ENCODE measurements at regions of chr2 and their contacts with region 1.

Region 1: GRCh38 chr2:38076606-38077430 is 867 bp upstream of the CYP1B1 start:
- DNase-seq: peak; percentile 80
- H3K4me3 Mint-ChIP-seq: peak overlapping the region; percentile 73
- H3K27ac Mint-ChIP-seq: peak overlapping the region; percentile 82
- H3K4me1 Mint-ChIP-seq: peaks cover 38% of the 10 kb centered on the region
- H3K27me3 Mint-ChIP-seq: peaks cover 64% of the 10 kb centered on the region

Region 2: DNA sequence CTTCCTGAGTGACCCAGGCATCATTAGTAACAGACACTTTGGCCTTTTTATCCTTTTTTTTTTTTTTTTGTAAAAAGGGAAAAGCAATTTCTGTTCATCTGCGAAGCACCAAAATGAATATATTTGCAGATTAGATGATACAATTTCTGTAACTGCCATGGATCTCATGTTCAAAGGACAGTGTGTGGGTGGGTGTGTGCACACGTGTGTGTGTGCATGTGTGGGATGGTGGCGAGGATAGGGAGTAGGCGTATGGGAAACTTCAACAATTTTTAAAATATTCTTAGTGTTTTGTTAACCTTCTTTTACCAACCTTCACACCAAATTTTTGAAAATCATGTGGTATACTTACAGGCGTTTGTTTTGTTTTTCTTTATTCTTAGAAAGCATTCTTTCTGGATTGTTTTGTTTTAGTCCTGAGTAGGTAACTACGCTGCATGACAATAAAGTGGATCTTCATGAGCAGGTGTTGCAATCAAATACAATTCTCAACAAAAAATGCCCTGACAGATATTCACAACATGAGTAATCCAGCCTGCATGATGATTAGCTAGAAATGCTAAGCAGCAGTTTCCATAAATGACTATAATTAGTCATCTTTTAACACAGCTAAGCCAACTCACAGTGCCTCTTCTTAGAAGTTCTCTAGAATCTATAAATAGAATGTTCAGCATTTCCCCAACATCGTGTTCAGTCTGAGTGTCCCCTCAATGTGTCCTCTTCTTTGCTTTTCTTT is 205.2 kb before region 1 on chr2:
- CTCF ChIA-PET with region 1: no interaction called
- DNase-seq: no peak
- H3K4me3 Mint-ChIP-seq: no peak overlapping the region
- H3K27ac Mint-ChIP-seq: no peak overlapping the region
- H3K4me1 Mint-ChIP-seq: peaks cover 16% of the 10 kb centered on the region
- H3K27me3 Mint-ChIP-seq: peaks cover 18% of the 10 kb centered on the region

Region 3: DNA sequence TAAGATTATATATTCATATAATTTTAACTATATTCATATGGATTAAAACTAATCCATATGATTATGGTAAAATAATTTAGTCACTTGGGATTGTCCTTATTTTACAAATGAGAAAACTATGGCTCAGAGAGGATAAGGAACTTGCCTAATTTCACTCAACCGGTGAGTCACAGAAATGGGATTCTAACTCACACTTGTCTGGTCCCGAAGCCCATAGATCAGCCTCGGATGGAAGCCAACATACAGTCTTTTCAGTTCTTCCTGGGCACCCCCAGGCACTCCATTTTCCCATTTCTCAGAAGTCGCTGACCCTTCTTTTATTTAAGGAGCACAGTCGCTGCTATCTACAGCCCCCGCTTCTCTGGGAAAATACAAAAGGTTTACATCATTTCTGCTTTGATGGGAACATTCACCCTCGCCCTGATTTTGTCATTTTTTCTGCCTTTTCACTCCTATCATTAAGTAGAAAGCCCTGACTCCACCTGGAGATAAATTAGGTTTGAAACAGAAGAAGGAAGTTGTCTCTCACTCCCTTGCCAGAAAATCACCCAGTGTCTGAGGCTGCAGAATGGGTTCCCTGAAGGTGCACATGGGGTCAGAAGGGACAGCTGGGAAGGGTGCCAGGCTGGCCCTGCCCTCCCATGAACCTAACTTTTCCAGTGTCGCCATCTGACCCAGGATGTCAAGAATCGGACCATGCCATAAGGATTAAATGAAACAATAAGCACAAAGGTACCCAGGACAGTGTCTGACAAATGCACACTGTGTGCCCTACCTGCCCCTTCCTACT is 37.5 kb before region 1 on chr2:
- CTCF ChIA-PET with region 1: no interaction called
- DNase-seq: no peak
- H3K4me3 Mint-ChIP-seq: no peak overlapping the region
- H3K27ac Mint-ChIP-seq: no peak overlapping the region
- H3K4me1 Mint-ChIP-seq: peaks cover 8% of the 10 kb centered on the region
- H3K27me3 Mint-ChIP-seq: peaks cover 42% of the 10 kb centered on the region

Region 4: DNA sequence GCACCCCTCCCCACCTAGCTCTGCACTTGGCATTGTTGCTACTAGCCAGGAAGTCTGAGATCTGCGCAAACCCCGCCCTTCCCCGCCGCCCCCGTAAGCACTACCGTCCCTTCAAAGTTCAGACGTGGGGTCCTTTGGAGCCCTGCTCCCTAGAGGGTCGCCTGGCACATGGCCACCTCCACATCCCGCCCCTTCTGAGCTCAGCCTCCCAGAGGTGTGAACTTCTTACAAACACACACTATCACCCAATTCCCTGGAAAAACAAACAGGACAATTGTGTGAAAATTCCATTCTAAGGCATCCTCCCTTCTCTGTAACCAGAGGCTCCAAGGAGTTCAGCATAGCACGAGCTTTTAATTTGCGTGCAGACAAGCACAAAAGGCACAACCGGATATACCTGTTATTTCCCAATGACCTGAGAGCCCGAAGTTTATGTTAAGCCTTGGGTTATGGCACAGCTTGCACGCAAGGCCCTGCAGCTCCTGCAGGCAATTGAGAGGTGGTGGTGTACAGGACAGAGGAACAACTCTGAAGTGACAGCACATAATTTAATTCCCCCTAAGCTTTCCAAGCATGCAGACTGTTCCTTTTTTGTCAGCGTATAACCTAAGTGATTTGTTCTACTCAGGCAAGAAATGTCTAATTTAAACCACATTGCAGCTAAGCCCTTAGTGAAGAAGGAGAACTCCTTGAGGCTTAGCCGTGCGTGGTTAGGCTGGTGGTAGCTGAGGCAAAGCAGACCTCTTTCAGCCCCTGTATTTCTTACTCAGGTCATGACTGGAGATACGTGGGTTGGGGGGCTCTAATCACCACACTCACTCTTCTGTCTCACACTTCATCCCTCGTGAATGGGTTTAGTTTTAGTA is 19.4 kb after region 1 on chr2:
- CTCF ChIA-PET with region 1: interaction called, 18 read pairs
- DNase-seq: no peak
- H3K4me3 Mint-ChIP-seq: no peak overlapping the region
- H3K27ac Mint-ChIP-seq: no peak overlapping the region
- H3K4me1 Mint-ChIP-seq: peaks cover 24% of the 10 kb centered on the region
- H3K27me3 Mint-ChIP-seq: peaks cover 69% of the 10 kb centered on the region

Region 5: DNA sequence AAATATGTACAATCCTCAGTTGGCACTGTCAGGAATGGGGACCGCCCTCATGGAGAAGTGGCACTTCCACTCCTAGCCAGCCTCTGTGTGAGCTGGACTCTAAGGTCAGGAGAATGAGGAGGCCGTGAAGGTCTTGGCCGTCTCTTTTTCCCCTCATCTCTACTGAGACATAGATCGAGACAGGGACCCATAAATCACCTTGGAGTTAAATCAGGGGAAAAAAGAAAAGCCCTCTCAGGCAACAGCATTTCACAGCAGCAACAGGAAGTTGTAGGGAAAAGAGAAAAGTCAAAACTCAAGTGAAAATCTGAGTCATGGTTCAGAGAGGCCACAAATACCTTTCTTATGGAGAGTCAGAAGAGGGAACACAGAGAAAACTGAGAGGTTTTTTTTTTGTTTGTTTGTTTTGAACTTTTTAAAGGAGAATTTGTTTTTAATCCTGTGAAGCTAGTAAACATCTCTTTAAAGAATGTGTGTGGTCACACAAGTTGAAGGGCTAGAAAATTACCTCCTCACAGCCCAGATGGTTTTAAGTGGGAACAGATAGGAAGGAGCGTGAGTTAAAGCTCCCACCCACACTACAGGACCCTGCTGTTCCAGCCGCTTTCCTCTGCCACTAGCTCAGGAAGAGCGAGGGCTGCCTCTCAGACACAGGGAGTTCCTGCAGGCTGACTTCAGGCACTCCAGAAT is 29.7 kb after region 1 on chr2:
- CTCF ChIA-PET with region 1: interaction called, 12 read pairs
- DNase-seq: no peak
- H3K4me3 Mint-ChIP-seq: no peak overlapping the region
- H3K27ac Mint-ChIP-seq: no peak overlapping the region
- H3K4me1 Mint-ChIP-seq: peaks cover 18% of the 10 kb centered on the region
- H3K27me3 Mint-ChIP-seq: peaks cover 21% of the 10 kb centered on the region

Region 6: DNA sequence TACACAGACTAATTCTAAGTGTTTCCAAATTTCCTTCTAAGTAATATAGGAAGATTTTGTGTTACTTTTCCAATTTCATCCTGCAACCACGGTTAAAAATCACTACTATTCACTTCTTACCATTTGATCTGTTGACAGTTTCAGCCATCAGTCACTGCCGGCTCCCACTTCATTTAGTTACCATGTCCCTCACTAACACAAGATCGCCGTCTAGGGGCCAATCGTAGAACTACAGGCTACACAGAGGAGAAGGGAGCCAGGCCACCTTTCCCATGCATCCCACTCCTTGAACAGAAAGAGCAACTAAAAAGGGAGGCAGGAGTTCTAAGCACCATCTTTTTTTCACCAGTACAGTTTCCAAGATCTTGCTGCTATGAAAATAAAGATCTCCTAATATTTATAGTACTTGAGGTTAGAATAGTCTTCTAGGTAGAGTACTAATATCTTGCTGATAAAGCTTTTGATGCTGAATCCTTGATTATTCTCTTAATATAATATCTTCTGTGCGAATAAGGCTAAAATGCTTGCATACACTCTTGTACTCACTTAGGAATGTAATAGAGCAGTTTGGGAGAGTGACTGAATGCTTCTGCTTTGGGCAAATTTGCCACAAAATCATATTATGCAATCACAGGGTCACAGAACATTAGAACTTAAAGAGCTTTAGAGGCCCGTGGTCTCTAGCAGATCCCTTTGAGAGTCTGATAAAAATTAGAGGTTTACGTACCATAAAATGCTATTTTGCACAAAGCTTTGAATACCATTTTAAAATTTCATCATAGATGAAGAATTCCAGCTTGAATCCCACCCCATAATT is 38.6 kb after region 1 on chr2:
- CTCF ChIA-PET with region 1: interaction called, 25 read pairs
- DNase-seq: peak; percentile 84
- H3K4me3 Mint-ChIP-seq: no peak overlapping the region
- H3K27ac Mint-ChIP-seq: no peak overlapping the region
- H3K4me1 Mint-ChIP-seq: peaks cover 2% of the 10 kb centered on the region
- H3K27me3 Mint-ChIP-seq: peaks cover 20% of the 10 kb centered on the region

Measured in activated naive CD4-positive, alpha-beta T cell treated with anti-CD3 and anti-CD28 coated beads, Interleukin-2, amount 10 ng/mL, durations not matched to agents 7 days and 5 days (primary cell).